GM10248 (cell line): ENCODE measurements at regions of chr7 and their contacts with region 1.

Region 1: DNA sequence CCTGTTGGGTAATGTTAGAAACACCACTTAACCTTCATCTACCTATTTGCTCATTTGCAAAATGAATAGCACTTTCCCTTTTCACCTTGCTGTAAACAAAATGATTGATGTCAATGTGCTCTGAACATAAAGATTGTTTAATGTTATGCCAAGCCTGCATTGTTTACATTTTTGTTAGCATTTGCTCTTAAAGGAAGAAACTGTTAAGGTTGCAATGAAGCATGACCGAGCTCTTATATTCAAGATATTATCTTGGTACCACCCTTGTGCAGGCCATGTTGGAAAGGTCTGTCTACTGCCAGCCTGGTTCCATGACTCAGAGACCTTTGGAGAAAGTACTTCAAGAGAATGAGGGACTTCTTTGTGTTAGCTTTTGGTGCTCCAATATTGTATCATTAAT is 170.8 kb downstream of the LHFPL3 start:
- DNase-seq: no peak
- CTCF ChIP-seq: no peak

Region 2: DNA sequence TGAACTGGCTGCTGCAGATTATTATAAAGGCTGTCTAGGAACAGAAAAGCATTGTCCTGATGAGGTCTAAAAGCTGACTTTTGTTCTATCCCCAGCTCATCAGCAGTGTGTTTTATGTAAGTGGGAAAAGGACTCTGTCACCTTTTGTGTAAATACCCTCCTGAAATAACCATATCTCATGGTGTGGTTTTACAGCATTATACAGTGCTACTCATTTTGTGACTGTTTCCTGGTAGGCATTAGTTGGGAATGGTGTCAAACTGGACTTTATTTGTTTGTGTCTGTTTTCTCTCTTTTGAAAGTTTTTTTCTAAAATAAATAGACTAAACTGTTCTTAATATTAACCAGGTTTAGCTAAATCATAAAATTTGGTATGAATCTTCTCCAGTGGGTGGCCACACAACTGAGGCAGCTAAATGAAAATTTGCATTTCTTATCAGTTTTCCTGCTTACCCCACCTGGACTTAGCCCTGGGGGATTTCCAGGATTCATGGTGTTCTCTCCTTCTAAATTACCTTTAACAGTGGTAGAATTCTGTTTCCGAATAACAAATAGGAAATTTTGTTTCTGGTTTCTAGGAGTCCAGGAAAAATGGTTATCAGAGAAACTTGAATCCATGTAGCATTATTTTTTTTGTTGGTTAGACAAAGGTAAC is 29.9 kb before region 1 on chr7:
- CTCF ChIA-PET with region 1: no interaction called
- POLR2A ChIA-PET with region 1: no interaction called
- DNase-seq: no peak
- CTCF ChIP-seq: no peak

Region 3: GRCh38 chr7:104486931-104487330 is 12.3 kb before region 1 on chr7:
- CTCF ChIA-PET with region 1: interaction called, 15 read pairs
- POLR2A ChIA-PET with region 1: no interaction called
- DNase-seq: no peak
- CTCF ChIP-seq: no peak

Region 4: GRCh38 chr7:104529567-104529966 is 30.3 kb after region 1 on chr7:
- CTCF ChIA-PET with region 1: no interaction called
- POLR2A ChIA-PET with region 1: no interaction called
- DNase-seq: no peak
- CTCF ChIP-seq: no peak

Region 5: GRCh38 chr7:104862719-104863118 is 363.5 kb after region 1 on chr7:
- CTCF ChIA-PET with region 1: no interaction called
- POLR2A ChIA-PET with region 1: no interaction called
- DNase-seq: no peak
- CTCF ChIP-seq: no peak